PC-9 (cell line): ENCODE measurements at regions of chr19 and their contacts with region 1.

Region 1: GRCh38 chr19:38929929-38930775 is at the start of gene SARS2:
- DNase-seq: peak; percentile 86 to 92
- H3K4me3 ChIP-seq: peak within 1 kb of the TSS; percentile 86
- H3K27ac ChIP-seq: peak within 1 kb of the TSS; percentile 65
- H3K4me1 ChIP-seq: peaks cover 17% of the 10 kb centered on the region; the same call in 1 of the 2 replicates
- H3K27me3 ChIP-seq: no peaks in the 10 kb centered on the region
- CTCF ChIP-seq: peak; percentile 93
- total RNA-seq, gene SARS2: 33.7 and 34.9 TPM in 2 replicates

Region 2: DNA sequence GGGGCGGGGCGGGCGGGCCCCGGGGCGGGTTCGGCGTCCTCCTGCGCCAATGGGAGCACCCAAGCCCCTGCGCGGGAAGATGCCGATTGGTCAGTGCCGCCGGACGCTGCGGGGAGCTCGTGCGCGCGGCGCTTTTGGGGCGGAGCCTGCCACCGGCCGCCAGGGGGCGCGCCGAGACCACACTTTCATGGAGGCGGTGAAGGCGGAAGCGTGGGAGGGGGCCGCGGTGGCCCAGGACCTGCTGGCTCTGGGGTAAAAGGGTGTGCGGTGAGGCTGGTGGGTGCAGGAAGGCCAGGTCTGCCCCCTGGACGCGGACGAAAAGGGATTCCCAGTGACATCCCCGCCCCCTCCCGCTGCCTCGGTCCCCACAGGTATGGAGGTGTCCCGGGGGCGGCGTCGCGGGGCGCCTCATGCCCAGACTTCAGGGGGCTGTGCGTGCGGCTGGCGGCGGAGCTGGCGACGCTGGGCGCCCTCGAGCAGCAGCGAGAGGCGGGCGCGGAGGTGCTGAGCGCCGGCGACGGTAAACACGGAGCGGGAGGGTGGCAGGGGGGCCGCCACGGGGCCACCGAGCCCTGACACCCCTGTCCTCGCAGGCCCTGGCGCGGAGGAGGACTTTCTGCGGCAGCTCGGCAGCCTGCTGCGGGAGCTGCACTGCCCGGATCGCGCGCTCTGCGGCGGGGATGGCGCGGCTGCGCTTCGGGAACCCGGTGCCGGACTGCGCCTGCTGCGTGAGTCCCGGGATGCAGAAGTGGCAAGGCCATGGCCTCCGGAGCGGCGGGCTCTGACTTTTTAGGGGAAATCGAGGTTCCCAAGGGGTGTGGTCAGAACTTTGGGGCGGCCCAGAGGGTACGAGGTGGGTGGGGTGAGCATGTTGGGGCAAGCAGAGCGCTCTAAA is 526.9 kb before region 1 on chr19 and contains the start of gene FAM98C:
- CTCF ChIA-PET with region 1: interaction called, 13 read pairs
- POLR2A ChIA-PET with region 1: no interaction called
- intact Hi-C with region 1: loop called (anchors 1 kb)
- DNase-seq: peak; percentile 90 to 97
- H3K4me3 ChIP-seq: peak within 1 kb of the TSS; percentile 94
- H3K27ac ChIP-seq: no peak within 1 kb of the TSS
- H3K4me1 ChIP-seq: peaks cover 8% of the 10 kb centered on the region; the same call in 1 of the 2 replicates
- H3K27me3 ChIP-seq: no peaks in the 10 kb centered on the region
- CTCF ChIP-seq: peak; percentile 94
- total RNA-seq, gene FAM98C: 15.8 and 19.5 TPM in 2 replicates

Region 3: DNA sequence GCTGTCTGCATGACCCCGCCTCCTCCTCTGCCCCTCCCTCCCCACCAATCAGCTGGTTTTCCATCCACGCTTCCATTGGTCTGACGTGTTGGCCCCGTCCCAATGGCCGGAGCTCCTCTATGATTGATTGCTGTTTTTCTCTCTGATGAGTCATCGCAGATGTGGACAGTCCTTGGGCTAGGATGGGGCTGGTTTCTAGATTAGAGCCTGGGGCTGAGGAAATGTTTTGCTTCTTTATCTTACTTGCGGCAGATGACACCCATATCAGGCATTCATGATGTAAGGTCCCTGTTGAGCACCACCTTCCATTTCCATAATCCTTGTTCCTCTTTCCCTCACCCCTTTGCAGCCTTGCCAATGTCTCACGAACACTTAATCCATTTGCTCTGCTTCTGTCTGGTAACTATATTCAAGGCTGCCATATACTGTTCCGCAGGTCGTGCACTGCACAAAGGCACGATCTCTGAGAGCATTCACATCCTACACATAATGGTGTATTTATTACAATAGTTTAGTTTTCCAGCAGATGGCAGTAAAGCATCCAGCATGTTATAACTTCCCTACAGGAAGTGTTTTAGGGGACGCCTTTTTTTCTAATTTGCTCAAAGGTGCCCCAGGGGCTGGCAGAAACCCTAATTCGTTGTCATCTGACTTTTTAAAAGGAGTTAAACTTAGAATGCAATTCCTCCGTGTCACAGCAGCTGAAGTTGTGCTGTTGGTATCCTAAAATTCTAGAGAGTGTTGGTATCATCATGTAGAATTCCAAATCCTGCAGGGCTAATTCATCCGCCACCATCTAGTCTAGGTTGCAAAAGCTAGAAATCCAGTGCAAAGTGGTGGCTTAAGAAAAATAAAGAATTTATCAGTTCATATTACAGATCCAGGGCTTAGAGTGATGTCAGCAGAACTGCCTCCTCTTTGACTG is 385.9 kb before region 1 on chr19:
- CTCF ChIA-PET with region 1: no interaction called
- POLR2A ChIA-PET with region 1: interaction called, 4 read pairs
- intact Hi-C with region 1: loop called (anchors 1 kb)
- DNase-seq: peak; percentile 60 to 87
- H3K4me3 ChIP-seq: no peak overlapping the region
- H3K27ac ChIP-seq: peak overlapping the region; percentile 47
- H3K4me1 ChIP-seq: peaks cover 24% of the 10 kb centered on the region
- H3K27me3 ChIP-seq: no peaks in the 10 kb centered on the region
- CTCF ChIP-seq: peak; percentile 83

Region 4: DNA sequence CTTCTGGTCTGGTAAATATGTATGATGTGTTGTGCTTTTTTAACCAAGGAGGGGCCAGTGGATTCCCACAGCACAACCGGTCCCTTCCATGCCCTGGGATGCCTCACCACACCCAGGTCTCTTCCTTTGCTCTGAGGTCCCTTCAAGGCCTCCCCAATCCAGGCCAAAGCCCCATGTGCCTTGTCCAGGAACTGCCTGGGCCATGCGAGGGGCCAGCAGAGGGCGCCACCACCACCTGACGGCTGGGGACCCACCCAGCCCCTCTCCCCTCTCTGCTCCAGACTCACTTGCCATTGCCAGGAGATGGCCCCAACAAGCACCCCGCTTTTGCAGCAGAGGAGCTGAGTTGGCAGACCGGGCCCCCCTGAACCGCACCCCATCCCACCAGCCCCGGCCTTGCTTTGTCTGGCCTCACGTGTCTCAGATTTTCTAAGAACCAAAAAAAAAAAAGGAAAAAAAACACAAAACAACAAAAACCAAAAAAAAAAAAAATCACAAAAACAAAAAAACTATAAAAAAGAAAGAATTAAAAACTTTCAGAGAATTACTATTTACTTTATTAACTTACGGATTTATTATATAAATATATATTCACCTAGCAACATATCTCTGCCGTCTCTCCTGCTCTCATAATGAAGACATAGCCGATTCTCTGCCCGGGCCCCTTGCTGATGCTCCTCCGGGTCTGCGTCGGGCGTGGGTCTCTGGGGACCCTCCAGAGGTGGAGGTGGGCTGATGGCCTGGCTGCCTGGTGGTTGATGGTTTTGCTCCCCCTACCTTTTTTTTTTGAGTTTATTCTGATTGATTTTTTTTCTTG is 200.3 kb before region 1 on chr19:
- CTCF ChIA-PET with region 1: interaction called, 8 read pairs
- POLR2A ChIA-PET with region 1: no interaction called
- intact Hi-C with region 1: loop called (anchors 5 kb)
- DNase-seq: peak; percentile 65 to 81
- H3K4me3 ChIP-seq: no peak overlapping the region
- H3K27ac ChIP-seq: peak overlapping the region; percentile 58; the same call in 1 of the 2 replicates
- H3K4me1 ChIP-seq: peaks cover 41% of the 10 kb centered on the region
- H3K27me3 ChIP-seq: no peaks in the 10 kb centered on the region
- CTCF ChIP-seq: peak; percentile 92

Region 5: GRCh38 chr19:38849860-38850435 is 80.2 kb before region 1 on chr19 and contains the start of gene HNRNPL:
- CTCF ChIA-PET with region 1: interaction called, 9 read pairs
- POLR2A ChIA-PET with region 1: interaction called, 5 read pairs
- intact Hi-C with region 1: loop called (anchors 1 kb)
- DNase-seq: peak; percentile 99
- H3K4me3 ChIP-seq: peak within 1 kb of the TSS; percentile 79
- H3K27ac ChIP-seq: peak within 1 kb of the TSS; percentile 93
- H3K4me1 ChIP-seq: peaks cover 35% of the 10 kb centered on the region
- H3K27me3 ChIP-seq: no peaks in the 10 kb centered on the region
- CTCF ChIP-seq: peak; percentile 63
- total RNA-seq, gene HNRNPL: 368 and 443 TPM in 2 replicates

Region 6: DNA sequence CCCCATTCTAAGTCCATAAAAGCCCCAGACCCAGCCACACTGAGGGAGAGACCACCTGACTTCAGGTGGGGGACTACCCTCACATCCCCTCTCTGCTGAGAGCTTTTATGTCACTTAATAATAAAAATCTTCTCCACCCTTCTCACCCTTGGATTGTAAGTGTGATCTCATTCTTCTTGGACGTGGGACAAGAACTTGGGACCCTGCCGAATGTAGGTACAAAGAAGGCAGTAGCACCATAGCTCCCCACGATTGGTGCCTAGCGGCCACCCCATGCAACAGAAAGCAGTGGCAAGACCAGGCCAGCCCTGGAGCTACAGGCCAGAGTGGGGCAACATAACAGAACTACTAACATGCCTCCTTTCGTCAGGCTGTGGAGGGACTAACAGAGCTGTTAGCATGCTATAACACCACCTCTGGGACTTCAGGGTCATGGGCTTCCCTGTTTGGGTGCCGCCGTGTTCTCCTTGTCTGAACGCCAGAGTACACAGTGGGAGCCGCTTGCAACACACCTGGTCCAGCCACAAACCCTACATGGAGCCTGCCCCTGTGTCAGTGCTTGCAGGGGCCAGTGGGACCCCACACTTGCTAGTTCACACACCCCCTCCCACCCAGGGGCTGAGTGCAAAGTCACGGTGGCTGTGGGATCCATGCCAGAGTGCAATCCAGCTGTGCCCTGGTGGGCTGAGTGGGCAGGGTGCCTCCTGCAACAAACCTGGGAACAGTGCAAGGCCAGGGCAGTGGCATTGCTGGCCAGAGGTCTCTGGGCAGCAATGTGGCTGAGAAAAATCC is 50.6 kb after region 1 on chr19:
- CTCF ChIA-PET with region 1: no interaction called
- POLR2A ChIA-PET with region 1: no interaction called
- intact Hi-C with region 1: no loop called
- DNase-seq: no peak
- H3K4me3 ChIP-seq: no peak overlapping the region
- H3K27ac ChIP-seq: no peak overlapping the region
- H3K4me1 ChIP-seq: no peaks in the 10 kb centered on the region
- H3K27me3 ChIP-seq: no peaks in the 10 kb centered on the region
- CTCF ChIP-seq: no peak